ENCODE measurements at regions of chr3 and their contacts with region 1.

Region 1: DNA sequence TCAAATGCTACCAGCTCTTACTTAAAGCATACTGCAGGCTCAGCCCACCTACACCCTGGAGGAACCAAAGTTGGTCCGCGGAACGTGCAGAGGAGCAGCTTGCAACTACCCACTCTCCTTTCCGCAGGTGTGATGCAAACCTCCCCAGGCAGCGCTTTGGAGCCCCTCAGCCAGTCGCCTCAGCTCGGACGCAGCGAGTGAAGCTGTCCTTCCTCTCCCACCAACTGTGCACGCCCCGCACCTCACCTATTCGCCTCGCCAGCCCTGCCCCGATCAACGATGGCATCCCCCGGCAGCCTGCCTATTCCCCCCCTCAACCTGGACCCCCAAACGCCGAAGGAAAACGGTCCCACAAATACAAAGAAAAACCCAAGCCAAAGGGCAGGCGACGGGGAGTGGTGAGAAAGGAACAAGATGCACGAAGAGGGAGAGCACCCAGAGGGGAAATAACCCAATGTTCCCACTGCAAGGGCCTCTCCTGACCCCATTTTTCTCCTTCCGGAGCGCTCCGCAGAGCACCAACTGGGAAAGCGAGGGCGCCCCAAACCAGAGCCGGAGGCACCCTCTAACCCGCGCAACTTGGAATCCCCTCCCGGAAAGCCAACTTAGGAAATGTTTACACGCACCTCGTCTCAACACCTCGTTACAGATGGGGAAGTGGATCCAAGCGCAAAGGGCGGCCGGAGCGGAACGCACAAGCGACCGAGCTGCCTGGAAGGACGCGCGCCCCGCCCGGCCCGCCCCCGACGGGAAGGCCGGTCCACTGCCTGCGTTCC is 665 bp downstream of the GLB1 start:
- DNase-seq: peak; percentile 83
- ATAC-seq: peak; percentile 63
- H3K4me3 ChIP-seq: peak overlapping the region; percentile 83 to 100 (median 94)
- H3K4me3 Mint-ChIP-seq: peak overlapping the region; percentile 96
- H3K27ac ChIP-seq: peak overlapping the region; percentile 94 to 96
- H3K27ac Mint-ChIP-seq: peak overlapping the region; percentile 94
- H3K4me1 ChIP-seq: peaks cover 11 to 21% of the 10 kb centered on the region in 2 donors
- H3K4me1 Mint-ChIP-seq: peaks cover 35% of the 10 kb centered on the region
- H3K27me3 ChIP-seq: no peaks in the 10 kb centered on the region
- H3K27me3 Mint-ChIP-seq: no peaks in the 10 kb centered on the region
- CTCF ChIP-seq: no peak

Region 2: GRCh38 chr3:33047842-33048834 is 48.1 kb before region 1 on chr3:
- CTCF ChIA-PET with region 1: no interaction called
- POLR2A ChIA-PET with region 1: interaction called, 10 read pairs
- intact Hi-C with region 1: no loop called
- DNase-seq: peak; percentile 55
- ATAC-seq: peak; percentile 75
- H3K4me3 ChIP-seq: peak overlapping the region in 1 of 5 experiments; percentile 23
- H3K4me3 Mint-ChIP-seq: peak overlapping the region; percentile 82
- H3K27ac ChIP-seq: peak overlapping the region in 1 of 2 donors; percentile 32
- H3K27ac Mint-ChIP-seq: peak overlapping the region; percentile 96
- H3K4me1 ChIP-seq: peaks cover 47 to 82% of the 10 kb centered on the region in 2 donors
- H3K4me1 Mint-ChIP-seq: peaks cover 78% of the 10 kb centered on the region
- H3K27me3 ChIP-seq: no peaks in the 10 kb centered on the region
- H3K27me3 Mint-ChIP-seq: no peaks in the 10 kb centered on the region
- CTCF ChIP-seq: no peak

Region 3: DNA sequence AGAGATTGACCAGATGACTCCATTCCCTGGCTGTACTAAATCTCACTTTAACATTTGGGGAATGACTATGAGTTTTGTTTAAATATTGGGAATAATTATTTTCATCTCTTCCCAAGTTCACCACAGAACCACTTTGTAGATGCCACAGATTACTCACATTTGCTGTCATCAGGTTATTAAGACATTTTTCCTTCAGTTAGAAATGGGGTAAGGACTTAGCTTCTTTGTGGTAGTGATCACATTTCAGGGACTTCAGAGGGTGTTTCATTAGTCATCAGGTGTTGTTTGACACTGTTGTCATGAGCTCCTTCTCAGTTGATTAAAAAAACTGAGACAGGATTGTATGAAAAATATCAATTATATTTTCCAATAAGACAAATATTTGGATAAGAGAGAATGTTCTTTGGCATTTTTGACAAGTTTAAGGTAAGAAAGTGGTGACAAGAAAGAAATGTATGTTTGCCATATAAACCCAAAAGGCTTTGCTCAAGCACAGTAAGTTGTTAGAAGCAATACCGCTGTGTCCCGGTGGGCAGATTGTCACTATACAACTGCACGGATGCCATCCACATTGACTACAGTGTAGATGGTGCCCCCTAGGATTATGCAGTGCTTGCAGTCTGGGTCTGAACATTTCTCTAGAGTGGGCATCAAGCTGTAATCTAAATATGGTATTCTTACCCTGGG is 203.3 kb after region 1 on chr3:
- CTCF ChIA-PET with region 1: no interaction called
- POLR2A ChIA-PET with region 1: no interaction called
- intact Hi-C with region 1: no loop called
- DNase-seq: no peak
- ATAC-seq: no peak
- H3K4me3 ChIP-seq: no peak overlapping the region
- H3K4me3 Mint-ChIP-seq: no peak overlapping the region
- H3K27ac ChIP-seq: no peak overlapping the region
- H3K27ac Mint-ChIP-seq: no peak overlapping the region
- H3K4me1 ChIP-seq: no peaks in the 10 kb centered on the region
- H3K4me1 Mint-ChIP-seq: no peaks in the 10 kb centered on the region
- H3K27me3 ChIP-seq: no peaks in the 10 kb centered on the region
- H3K27me3 Mint-ChIP-seq: no peaks in the 10 kb centered on the region
- CTCF ChIP-seq: no peak

Region 4: GRCh38 chr3:33521736-33522135 is 425.5 kb after region 1 on chr3:
- CTCF ChIA-PET with region 1: no interaction called
- POLR2A ChIA-PET with region 1: no interaction called
- intact Hi-C with region 1: no loop called
- DNase-seq: no peak
- ATAC-seq: no peak
- H3K4me3 ChIP-seq: no peak overlapping the region
- H3K4me3 Mint-ChIP-seq: no peak overlapping the region
- H3K27ac ChIP-seq: no peak overlapping the region
- H3K27ac Mint-ChIP-seq: no peak overlapping the region
- H3K4me1 ChIP-seq: no peaks in the 10 kb centered on the region
- H3K4me1 Mint-ChIP-seq: no peaks in the 10 kb centered on the region
- H3K27me3 ChIP-seq: no peaks in the 10 kb centered on the region
- H3K27me3 Mint-ChIP-seq: no peaks in the 10 kb centered on the region
- CTCF ChIP-seq: no peak

Region 5: GRCh38 chr3:33798411-33799201 is 702.3 kb after region 1 on chr3 and contains the start of gene PDCD6IP:
- CTCF ChIA-PET with region 1: no interaction called
- POLR2A ChIA-PET with region 1: no interaction called
- intact Hi-C with region 1: loop called (anchors 1 kb)
- DNase-seq: peak; percentile 95
- ATAC-seq: peak; percentile 86
- H3K4me3 ChIP-seq: peak within 1 kb of the TSS; percentile 89 to 94 (median 93)
- H3K4me3 Mint-ChIP-seq: peak within 1 kb of the TSS; percentile 99
- H3K27ac ChIP-seq: peak within 1 kb of the TSS; percentile 84 to 86
- H3K27ac Mint-ChIP-seq: peak within 1 kb of the TSS; percentile 96
- H3K4me1 ChIP-seq: peaks cover 28 to 32% of the 10 kb centered on the region in 2 donors
- H3K4me1 Mint-ChIP-seq: peaks cover 46% of the 10 kb centered on the region
- H3K27me3 ChIP-seq: no peaks in the 10 kb centered on the region
- H3K27me3 Mint-ChIP-seq: no peaks in the 10 kb centered on the region
- CTCF ChIP-seq: peak; percentile 25
- total RNA-seq, gene PDCD6IP: 276 TPM in 2 replicates